CD14-positive monocyte (primary cell): ENCODE measurements at regions of chr15 and their contacts with region 1.

Region 1: GRCh38 chr15:50908210-50909009 is at the start of gene AP4E1:
- DNase-seq: peak; percentile 91 to 97 (median 94)
- H3K4me3 ChIP-seq: peak within 1 kb of the TSS; percentile 72 to 96 (median 95)
- H3K4me3 Mint-ChIP-seq: peak within 1 kb of the TSS; percentile 97 to 100
- H3K27ac ChIP-seq: peak within 1 kb of the TSS; percentile 77 to 92
- H3K27ac Mint-ChIP-seq: peak within 1 kb of the TSS; percentile 86 to 99 (median 94)
- H3K4me1 ChIP-seq: peaks cover 43 to 47% of the 10 kb centered on the region in 2 donors
- H3K4me1 Mint-ChIP-seq: peaks cover 39% of the 10 kb centered on the region
- H3K27me3 ChIP-seq: no peaks in the 10 kb centered on the region
- H3K27me3 Mint-ChIP-seq: peaks cover 0 to 2% (median 0%) of the 10 kb centered on the region in 3 donors
- CTCF ChIP-seq: peak; percentile 94
- polyA plus RNA-seq, gene AP4E1: 4.1 to 7.7 (median 5.3) TPM

Region 2: GRCh38 chr15:50675536-50676144 is 232.8 kb before region 1 on chr15:
- intact Hi-C with region 1: loop called (anchors 1 to 5 kb)
- DNase-seq: peak; percentile 8 to 21 (median 13)
- H3K4me3 ChIP-seq: no peak overlapping the region
- H3K4me3 Mint-ChIP-seq: no peak overlapping the region
- H3K27ac ChIP-seq: peak overlapping the region in 1 of 2 donors; percentile 47
- H3K27ac Mint-ChIP-seq: no peak overlapping the region
- H3K4me1 ChIP-seq: no peaks in the 10 kb centered on the region
- H3K4me1 Mint-ChIP-seq: peaks cover 6% of the 10 kb centered on the region
- H3K27me3 ChIP-seq: no peaks in the 10 kb centered on the region
- H3K27me3 Mint-ChIP-seq: no peaks in the 10 kb centered on the region
- CTCF ChIP-seq: peak; percentile 94

Region 3: DNA sequence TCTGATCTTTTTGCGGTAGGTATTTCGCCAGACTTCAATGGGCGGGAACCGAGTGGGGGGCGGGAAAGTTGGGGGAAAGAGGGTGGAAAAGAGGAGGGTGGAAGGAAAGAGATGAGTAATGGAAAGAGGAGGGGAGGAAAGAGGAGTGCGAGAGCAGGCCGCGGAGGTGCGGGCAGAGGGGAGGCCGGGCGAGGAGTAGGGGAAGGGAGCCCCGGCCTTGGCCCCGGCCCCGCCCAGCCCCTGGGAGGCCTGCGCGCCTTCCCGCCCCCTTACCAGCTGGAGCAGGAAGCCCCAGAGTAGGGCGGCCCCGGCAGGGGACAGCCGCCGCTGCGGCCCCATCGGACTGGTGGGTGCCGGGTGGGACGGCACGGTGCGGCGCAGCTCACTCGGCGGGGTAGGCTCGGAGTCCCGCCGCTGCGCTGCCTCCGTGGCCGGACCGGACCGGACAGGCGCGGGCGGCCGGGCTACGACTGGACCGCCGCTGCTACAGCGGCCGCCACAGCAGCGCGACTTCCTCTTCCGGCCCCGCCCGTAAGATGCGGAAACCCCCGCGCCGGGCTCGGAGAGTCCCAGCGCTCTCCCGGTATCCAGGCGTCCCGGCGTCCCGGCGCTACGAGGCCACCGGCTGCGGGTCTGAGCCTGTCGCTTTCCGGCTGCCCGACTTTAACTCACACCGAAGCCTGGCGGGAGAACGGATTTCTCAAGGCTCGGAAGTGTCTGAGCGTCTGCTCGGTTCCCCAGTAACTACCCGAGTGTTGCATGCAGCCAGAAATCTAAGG is 143.0 kb before region 1 on chr15 and contains the start of gene SPPL2A:
- intact Hi-C with region 1: loop called in 1 of 2 experiments (anchors 2 kb)
- DNase-seq: peak; percentile 81 to 87 (median 83)
- H3K4me3 ChIP-seq: peak within 1 kb of the TSS; percentile 82 to 91 (median 89)
- H3K4me3 Mint-ChIP-seq: peak within 1 kb of the TSS; percentile 89 to 94
- H3K27ac ChIP-seq: peak within 1 kb of the TSS; percentile 87 to 98
- H3K27ac Mint-ChIP-seq: peak within 1 kb of the TSS; percentile 90 to 98 (median 97)
- H3K4me1 ChIP-seq: peaks cover 24 to 34% of the 10 kb centered on the region in 2 donors
- H3K4me1 Mint-ChIP-seq: peaks cover 36% of the 10 kb centered on the region
- H3K27me3 ChIP-seq: no peaks in the 10 kb centered on the region
- H3K27me3 Mint-ChIP-seq: peaks cover 1 to 8% (median 7%) of the 10 kb centered on the region in 3 donors
- CTCF ChIP-seq: no peak
- polyA plus RNA-seq, gene SPPL2A: 111 to 204 (median 190) TPM

Region 4: DNA sequence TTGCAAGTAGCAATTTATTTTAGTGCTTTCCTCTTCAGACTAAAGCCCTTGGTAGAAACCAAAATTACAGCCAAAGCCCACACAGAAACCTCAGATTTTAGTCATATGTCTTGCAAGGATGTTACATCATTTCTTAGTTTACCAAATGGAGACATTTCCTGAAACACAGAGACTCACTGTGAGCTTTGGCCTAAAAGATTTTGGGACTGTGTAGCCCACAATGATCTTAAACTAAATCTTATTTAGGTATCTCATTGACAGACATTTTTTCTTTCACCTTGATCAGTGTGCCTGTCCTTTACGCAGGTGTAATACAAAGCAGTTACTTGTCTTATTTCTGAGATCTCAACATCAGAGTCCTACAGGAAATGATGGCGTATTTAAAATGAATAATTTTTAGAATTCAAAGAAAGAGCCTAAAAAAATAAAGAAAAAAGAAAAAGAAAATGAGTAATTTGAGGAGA is 27.7 kb before region 1 on chr15:
- intact Hi-C with region 1: loop called in 1 of 2 experiments (anchors 2 kb)
- DNase-seq: peak; percentile 48 to 86 (median 79)
- H3K4me3 ChIP-seq: peak overlapping the region in 1 of 3 experiments; percentile 10
- H3K4me3 Mint-ChIP-seq: peak overlapping the region in 1 of 2 donors; percentile 26
- H3K27ac ChIP-seq: peak overlapping the region in 1 of 2 donors; percentile 86
- H3K27ac Mint-ChIP-seq: peak overlapping the region; percentile 78 to 93 (median 85)
- H3K4me1 ChIP-seq: peaks cover 70 to 82% of the 10 kb centered on the region in 2 donors
- H3K4me1 Mint-ChIP-seq: peaks cover 74% of the 10 kb centered on the region
- H3K27me3 ChIP-seq: no peaks in the 10 kb centered on the region
- H3K27me3 Mint-ChIP-seq: no peaks in the 10 kb centered on the region
- CTCF ChIP-seq: no peak

Region 5: DNA sequence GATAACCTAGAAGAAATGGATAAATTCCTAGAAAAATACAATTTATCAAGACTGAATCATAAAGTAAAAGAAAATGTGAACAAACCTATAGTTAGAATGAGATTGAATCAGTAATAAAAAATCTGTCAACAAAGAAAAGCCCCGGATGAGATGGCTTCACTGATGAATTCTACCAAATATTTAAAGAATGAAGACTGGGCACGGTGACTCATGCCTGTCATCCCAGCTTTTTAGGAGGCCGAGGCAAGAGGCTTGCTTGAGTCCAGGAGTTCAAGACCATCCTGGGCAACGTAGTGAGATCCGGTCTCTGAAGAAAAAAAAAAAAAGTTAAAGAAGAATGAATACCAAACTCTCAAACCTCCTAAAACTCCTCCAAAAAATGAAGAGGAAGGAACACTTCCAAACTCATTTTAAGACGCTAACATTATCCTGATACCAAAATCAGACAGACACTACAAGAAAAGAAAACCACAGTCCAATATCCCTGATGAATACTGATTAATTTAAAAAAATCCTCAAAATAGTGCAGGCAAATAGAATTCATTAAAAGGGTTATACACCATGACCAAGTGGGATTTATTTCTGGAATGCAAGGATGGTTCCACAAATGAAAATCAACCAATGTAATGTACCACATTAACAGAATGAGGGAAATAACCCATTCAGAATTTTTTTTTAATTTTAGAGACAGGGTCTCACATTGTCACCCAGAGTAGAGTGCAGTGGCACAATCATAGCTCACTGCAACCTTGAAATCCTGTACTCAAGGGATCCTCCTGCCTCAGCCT is 17.4 kb before region 1 on chr15:
- intact Hi-C with region 1: no loop called
- DNase-seq: no peak
- H3K4me3 ChIP-seq: no peak overlapping the region
- H3K4me3 Mint-ChIP-seq: no peak overlapping the region
- H3K27ac ChIP-seq: no peak overlapping the region
- H3K27ac Mint-ChIP-seq: no peak overlapping the region
- H3K4me1 ChIP-seq: peaks cover 3 to 19% of the 10 kb centered on the region in 2 donors
- H3K4me1 Mint-ChIP-seq: peaks cover 15% of the 10 kb centered on the region
- H3K27me3 ChIP-seq: no peaks in the 10 kb centered on the region
- H3K27me3 Mint-ChIP-seq: peaks cover 0 to 9% (median 0%) of the 10 kb centered on the region in 3 donors
- CTCF ChIP-seq: no peak